CD8-positive, alpha-beta memory T cell (primary cell): ENCODE measurements at regions of chr3 and their contacts with region 1.

Region 1: DNA sequence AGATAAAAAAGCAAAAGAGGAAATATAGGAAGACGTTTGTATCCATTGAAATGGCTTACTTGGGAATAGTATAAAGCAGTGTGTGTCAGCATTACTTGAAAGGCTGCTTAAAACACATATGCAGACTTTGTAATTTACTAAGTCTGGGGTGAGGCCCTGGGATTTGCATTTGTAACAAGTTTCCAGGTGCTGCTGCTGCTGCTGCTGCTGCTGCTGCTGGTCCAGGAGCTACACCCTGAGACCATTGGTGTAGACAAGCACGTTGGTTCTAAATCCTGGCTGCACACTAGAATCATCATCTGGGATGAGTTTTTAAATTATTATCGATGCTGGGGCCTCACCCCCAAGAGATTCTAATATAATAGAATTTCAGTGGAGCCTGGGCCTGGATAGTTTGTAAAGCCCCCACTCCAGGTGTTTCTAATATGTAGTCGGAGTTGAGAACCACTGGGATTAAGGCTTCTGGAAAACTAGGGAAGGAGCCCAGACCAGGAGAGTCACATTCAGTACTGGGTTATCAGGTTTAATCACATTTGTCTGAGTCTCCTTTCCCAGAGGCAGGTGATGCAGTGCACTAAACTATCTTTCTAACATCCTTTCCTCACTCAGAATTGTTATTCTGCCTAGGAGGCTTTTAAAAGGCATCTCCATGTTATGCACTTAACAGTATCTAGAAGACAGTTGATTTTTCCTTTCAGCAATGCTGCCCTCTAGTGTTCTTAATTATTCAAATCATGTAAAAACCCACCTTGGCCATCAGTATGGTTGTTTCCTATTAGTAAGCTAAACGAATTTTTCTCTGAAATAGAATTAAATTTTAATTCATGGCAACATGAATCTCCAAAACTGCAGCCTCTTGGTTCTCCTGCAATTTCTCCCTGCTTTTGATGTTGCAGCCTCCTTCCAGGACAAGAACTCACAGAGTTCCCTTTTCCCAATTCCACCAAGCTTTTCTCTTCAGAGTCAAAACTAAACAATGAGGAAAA is 45.4 kb downstream of the SSR3 start:
- DNase-seq: peak in 2 of 5 donors; percentile 50
- H3K4me3 ChIP-seq: no peak overlapping the region
- H3K4me3 Mint-ChIP-seq: no peak overlapping the region
- H3K27ac ChIP-seq: no peak overlapping the region
- H3K27ac Mint-ChIP-seq: no peak overlapping the region
- H3K4me1 ChIP-seq: no peaks in the 10 kb centered on the region
- H3K4me1 Mint-ChIP-seq: no peaks in the 10 kb centered on the region
- H3K27me3 ChIP-seq: no peaks in the 10 kb centered on the region
- H3K27me3 Mint-ChIP-seq: peaks cover 4 to 5% of the 10 kb centered on the region in 2 donors

Region 2: GRCh38 chr3:156151824-156152428 is 357.6 kb before region 1 on chr3:
- CTCF ChIA-PET with region 1: interaction called, 85 read pairs
- POLR2A ChIA-PET with region 1: no interaction called
- DNase-seq: peak; percentile 10 to 66 (median 24)
- H3K4me3 ChIP-seq: no peak overlapping the region
- H3K4me3 Mint-ChIP-seq: no peak overlapping the region
- H3K27ac ChIP-seq: no peak overlapping the region
- H3K27ac Mint-ChIP-seq: peak overlapping the region in 1 of 8 donors; percentile 22
- H3K4me1 ChIP-seq: no peaks in the 10 kb centered on the region
- H3K4me1 Mint-ChIP-seq: peaks cover 0 to 7% (median 7%) of the 10 kb centered on the region in 3 donors
- H3K27me3 ChIP-seq: no peaks in the 10 kb centered on the region
- H3K27me3 Mint-ChIP-seq: peaks cover 0 to 2% of the 10 kb centered on the region in 2 donors

Region 3: DNA sequence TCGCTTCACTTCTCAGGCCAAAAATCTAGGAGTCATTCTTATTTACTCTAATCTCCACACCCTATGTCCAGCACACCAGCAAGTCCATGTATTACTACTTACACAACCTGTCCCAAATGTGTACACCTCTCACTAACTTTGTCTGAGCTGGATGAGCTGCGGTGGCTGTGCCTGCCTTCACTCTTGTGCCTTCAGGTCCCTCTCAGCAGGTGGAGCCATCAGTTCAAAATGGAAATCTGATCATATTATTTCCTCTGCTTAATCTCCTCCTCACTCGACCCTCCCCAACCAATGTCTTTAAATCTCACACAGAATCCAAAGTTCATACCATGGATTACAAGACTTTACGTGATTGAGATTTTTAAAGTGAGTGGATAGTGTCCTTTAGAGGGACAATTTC is 37.3 kb before region 1 on chr3:
- CTCF ChIA-PET with region 1: interaction called, 17 read pairs
- POLR2A ChIA-PET with region 1: no interaction called
- DNase-seq: no peak
- H3K4me3 ChIP-seq: no peak overlapping the region
- H3K4me3 Mint-ChIP-seq: no peak overlapping the region
- H3K27ac ChIP-seq: no peak overlapping the region
- H3K27ac Mint-ChIP-seq: peak overlapping the region in 1 of 8 donors; percentile 61
- H3K4me1 ChIP-seq: no peaks in the 10 kb centered on the region
- H3K4me1 Mint-ChIP-seq: no peaks in the 10 kb centered on the region
- H3K27me3 ChIP-seq: no peaks in the 10 kb centered on the region
- H3K27me3 Mint-ChIP-seq: peaks cover 16 to 40% of the 10 kb centered on the region in 2 donors

Region 4: GRCh38 chr3:156522673-156523072 is 13.2 kb after region 1 on chr3:
- CTCF ChIA-PET with region 1: interaction called, 18 read pairs
- POLR2A ChIA-PET with region 1: interaction called, 3 read pairs
- DNase-seq: no peak
- H3K4me3 ChIP-seq: no peak overlapping the region
- H3K4me3 Mint-ChIP-seq: no peak overlapping the region
- H3K27ac ChIP-seq: no peak overlapping the region
- H3K27ac Mint-ChIP-seq: peak overlapping the region in 1 of 8 donors; percentile 91
- H3K4me1 ChIP-seq: peaks cover 6% of the 10 kb centered on the region
- H3K4me1 Mint-ChIP-seq: peaks cover 9 to 22% (median 20%) of the 10 kb centered on the region in 3 donors
- H3K27me3 ChIP-seq: no peaks in the 10 kb centered on the region
- H3K27me3 Mint-ChIP-seq: peaks cover 17 to 19% of the 10 kb centered on the region in 2 donors

Region 5: DNA sequence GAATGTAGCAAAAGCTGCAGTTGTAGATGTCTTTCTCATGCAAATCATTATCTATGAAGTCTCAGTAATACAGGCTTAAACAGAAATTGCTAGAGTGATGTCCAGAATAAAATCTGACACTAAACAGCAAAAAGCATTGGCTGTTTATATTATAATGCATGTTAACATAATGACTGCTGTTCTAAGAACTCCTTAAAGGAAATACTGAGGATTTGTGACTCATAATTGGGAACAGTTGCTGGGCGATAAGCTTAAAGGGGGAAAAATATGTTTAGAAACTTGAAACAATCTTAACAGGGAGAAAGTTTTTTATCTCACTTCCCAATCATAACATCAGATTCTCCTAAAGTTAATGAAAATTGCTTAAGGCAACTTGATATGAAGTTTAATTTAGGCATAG is 182.4 kb after region 1 on chr3:
- CTCF ChIA-PET with region 1: no interaction called
- POLR2A ChIA-PET with region 1: no interaction called
- DNase-seq: no peak
- H3K4me3 ChIP-seq: no peak overlapping the region
- H3K4me3 Mint-ChIP-seq: no peak overlapping the region
- H3K27ac ChIP-seq: no peak overlapping the region
- H3K27ac Mint-ChIP-seq: peak overlapping the region in 2 of 8 donors; percentile 7 to 26
- H3K4me1 ChIP-seq: peaks cover 32% of the 10 kb centered on the region
- H3K4me1 Mint-ChIP-seq: peaks cover 62 to 87% (median 80%) of the 10 kb centered on the region in 3 donors
- H3K27me3 ChIP-seq: no peaks in the 10 kb centered on the region
- H3K27me3 Mint-ChIP-seq: no peaks in the 10 kb centered on the region